ENCODE measurements at regions of chr7 and their contacts with region 1.

Region 1: DNA sequence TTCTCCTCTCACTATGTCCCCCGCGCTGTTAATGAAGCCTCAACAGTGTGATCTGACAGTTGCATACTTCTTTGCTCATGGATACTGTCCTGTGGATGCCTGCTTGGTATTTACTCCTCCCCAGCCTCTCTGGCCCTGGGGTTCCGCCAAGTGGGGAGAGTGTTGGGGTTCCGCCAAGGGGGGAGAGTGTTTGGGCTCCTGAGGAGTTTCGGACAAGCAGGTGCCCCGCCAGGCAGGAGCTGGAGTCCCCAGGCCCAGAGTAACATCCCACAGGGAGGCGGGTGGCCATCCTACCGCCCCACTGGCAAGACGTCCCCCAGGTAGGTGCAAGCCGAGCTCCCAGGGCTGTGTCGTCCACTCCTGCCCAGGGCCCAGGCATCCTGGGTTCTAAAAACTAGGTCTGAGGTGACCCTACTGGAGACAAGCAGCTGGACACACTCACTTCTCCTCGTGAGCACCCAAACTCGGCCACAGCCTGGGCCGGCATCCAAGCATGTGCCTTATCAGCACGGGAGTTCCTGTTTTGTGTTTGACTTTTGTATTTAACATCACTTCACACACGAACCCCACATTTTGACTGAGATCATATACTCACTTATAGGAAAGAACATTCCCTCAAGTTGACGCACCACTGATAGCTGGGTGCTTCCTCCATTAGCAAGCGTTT is 34.2 kb downstream of the CAMK2B start:
- DNase-seq: peak; percentile 84 to 95 (median 94)
- ATAC-seq: peak; percentile 72 to 78
- H3K4me3 ChIP-seq: no peak overlapping the region
- H3K27ac ChIP-seq: peak overlapping the region; percentile 87
- H3K4me1 ChIP-seq: peaks cover 26% of the 10 kb centered on the region
- H3K27me3 ChIP-seq: no peaks in the 10 kb centered on the region

Region 2: DNA sequence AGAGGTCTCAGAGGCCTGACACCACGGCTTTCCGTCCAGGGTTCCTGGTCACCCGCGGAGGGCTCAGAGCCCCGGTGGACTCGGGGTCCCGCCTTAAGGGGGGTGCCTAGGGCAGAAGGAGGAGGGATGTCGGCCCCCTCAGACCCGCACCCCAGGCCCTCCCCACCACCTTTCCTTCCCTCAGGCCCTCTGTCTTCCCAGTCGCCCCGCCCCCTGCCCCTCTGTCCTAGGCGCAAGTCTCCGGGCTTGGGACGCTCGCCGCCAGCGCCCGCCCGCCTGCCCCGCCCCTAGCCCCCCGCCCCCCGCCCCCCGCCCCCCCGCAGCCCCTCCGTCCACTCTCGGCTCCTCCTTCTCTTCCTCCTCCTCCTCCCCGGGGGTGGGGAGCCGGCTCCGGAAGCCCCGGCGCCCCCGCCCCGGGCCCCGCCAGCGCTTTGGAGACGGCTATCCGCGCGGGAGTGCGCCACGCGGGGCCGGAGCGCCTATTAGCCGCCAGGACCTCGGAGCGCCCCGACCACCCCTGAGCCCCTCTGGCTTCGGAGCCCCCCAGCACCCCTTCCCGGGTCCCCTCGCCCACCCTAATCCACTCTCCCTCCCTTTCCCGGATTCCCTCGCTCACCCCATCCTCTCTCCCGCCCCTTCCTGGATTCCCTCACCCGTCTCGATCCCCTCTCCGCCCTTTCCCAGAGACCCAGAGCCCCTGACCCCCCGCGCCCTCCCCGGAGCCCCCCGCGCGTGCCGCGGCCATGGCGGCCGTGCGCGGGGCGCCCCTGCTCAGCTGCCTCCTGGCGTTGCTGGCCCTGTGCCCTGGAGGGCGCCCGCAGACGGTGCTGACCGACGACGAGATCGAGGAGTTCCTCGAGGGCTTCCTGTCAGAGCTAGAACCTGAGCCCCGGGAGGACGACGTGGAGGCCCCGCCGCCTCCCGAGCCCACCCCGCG is 187.0 kb before region 1 on chr7 and contains the start of gene AEBP1:
- intact Hi-C with region 1: no loop called
- DNase-seq: peak; percentile 60 to 83 (median 81)
- ATAC-seq: peak; percentile 38 to 60
- H3K4me3 ChIP-seq: peak within 1 kb of the TSS; percentile 65
- H3K27ac ChIP-seq: peak within 1 kb of the TSS; percentile 42
- H3K4me1 ChIP-seq: no peaks in the 10 kb centered on the region
- H3K27me3 ChIP-seq: no peaks in the 10 kb centered on the region
- total RNA-seq, gene AEBP1: 81.0 to 124 (median 103) TPM

Region 3: GRCh38 chr7:44216019-44216418 is 75.2 kb before region 1 on chr7:
- intact Hi-C with region 1: no loop called
- DNase-seq: peak in 1 of 3 donors; percentile 8
- ATAC-seq: no peak
- H3K4me3 ChIP-seq: no peak overlapping the region
- H3K27ac ChIP-seq: no peak overlapping the region
- H3K4me1 ChIP-seq: no peaks in the 10 kb centered on the region
- H3K27me3 ChIP-seq: no peaks in the 10 kb centered on the region

Region 4: GRCh38 chr7:44257618-44258422 is 33.4 kb before region 1 on chr7:
- intact Hi-C with region 1: loop called in 1 of 4 experiments (anchors 5 kb)
- DNase-seq: peak; percentile 84 to 89 (median 89)
- ATAC-seq: peak; percentile 88 to 94
- H3K4me3 ChIP-seq: no peak overlapping the region
- H3K27ac ChIP-seq: peak overlapping the region; percentile 78
- H3K4me1 ChIP-seq: peaks cover 27% of the 10 kb centered on the region
- H3K27me3 ChIP-seq: no peaks in the 10 kb centered on the region

Measured in right cardiac atrium (tissue), 5 donors.